CD4-positive, alpha-beta memory T cell (primary cell): ENCODE measurements at regions of chr10 and their contacts with region 1.

Region 1: DNA sequence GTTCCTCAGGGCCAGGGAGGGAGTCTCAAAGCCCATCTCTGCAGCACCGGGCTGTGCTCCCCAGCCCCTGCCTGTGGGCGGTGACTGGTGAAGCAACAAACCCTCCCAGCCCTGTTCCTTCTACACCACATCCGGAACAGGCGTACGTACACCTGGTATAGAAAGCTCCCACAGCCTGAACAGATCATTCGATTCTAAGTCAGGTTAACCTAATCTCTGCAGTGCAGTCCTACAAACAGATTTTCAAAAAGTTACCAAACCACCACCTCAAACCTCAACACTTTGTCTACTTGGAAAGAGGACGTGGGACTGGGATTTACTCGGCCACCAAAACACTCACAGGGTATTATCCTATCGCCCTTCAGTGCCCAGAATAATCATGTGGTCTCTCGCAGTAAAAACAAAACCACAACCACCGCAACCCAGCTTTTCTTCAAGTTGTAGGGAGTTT is 238.4 kb downstream of the DIP2C start:
- DNase-seq: peak; percentile 81 to 86 (median 84)
- H3K4me3 ChIP-seq: peak overlapping the region in 1 of 2 donors; percentile 37
- H3K4me3 Mint-ChIP-seq: peak overlapping the region; percentile 72 to 89 (median 79)
- H3K27ac ChIP-seq: peak overlapping the region; percentile 14
- H3K27ac Mint-ChIP-seq: peak overlapping the region; percentile 88 to 95 (median 90)
- H3K4me1 ChIP-seq: peaks cover 65% of the 10 kb centered on the region
- H3K4me1 Mint-ChIP-seq: peaks cover 33 to 71% (median 56%) of the 10 kb centered on the region in 4 donors
- H3K27me3 ChIP-seq: no peaks in the 10 kb centered on the region
- H3K27me3 Mint-ChIP-seq: no peaks in the 10 kb centered on the region

Region 2: DNA sequence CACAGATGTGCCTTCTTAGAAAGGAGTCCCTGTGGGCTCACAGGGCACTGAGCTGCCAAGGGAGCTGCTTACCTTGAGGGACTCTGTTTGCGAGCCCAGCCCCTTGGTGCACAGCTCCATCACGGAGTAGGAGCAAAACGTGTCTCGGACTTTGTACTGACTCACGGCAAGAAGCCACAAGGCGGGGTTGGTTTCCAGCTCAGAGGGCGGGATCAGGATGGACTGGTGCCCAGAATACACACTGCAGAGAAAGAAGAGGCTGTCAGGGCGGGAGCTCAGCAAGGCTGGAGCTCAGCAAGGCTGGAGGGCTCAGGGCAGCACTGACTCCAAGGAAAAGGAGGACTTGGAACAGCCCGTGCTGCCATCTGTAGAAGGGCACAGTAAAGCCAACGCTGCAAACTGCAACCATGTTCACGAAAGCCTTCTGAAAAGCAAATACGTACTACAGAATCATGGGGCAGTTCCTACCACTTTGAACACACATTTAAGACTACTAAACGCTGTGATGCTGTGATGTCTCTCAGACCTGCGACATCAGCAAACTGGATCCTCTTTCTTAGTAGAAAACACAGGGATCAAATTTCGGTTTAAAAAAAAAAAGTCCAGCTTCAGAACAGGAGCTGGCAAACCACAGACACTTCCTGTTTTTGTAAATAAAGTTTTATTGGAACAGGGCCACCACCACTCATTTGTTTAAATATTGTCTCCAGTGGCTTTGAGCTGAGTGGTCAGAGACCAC is 121.5 kb before region 1 on chr10:
- CTCF ChIA-PET with region 1: no interaction called
- POLR2A ChIA-PET with region 1: interaction called, 4 read pairs
- intact Hi-C with region 1: loop called (anchors 5 kb)
- DNase-seq: peak in 4 of 5 donors; percentile 15 to 51 (median 28)
- H3K4me3 ChIP-seq: peak overlapping the region in 1 of 2 donors; percentile 38
- H3K4me3 Mint-ChIP-seq: peak overlapping the region; percentile 63 to 82 (median 76)
- H3K27ac ChIP-seq: peak overlapping the region; percentile 20
- H3K27ac Mint-ChIP-seq: peak overlapping the region; percentile 26 to 89 (median 81)
- H3K4me1 ChIP-seq: peaks cover 40% of the 10 kb centered on the region
- H3K4me1 Mint-ChIP-seq: peaks cover 23 to 50% (median 42%) of the 10 kb centered on the region in 4 donors
- H3K27me3 ChIP-seq: no peaks in the 10 kb centered on the region
- H3K27me3 Mint-ChIP-seq: no peaks in the 10 kb centered on the region

Region 3: DNA sequence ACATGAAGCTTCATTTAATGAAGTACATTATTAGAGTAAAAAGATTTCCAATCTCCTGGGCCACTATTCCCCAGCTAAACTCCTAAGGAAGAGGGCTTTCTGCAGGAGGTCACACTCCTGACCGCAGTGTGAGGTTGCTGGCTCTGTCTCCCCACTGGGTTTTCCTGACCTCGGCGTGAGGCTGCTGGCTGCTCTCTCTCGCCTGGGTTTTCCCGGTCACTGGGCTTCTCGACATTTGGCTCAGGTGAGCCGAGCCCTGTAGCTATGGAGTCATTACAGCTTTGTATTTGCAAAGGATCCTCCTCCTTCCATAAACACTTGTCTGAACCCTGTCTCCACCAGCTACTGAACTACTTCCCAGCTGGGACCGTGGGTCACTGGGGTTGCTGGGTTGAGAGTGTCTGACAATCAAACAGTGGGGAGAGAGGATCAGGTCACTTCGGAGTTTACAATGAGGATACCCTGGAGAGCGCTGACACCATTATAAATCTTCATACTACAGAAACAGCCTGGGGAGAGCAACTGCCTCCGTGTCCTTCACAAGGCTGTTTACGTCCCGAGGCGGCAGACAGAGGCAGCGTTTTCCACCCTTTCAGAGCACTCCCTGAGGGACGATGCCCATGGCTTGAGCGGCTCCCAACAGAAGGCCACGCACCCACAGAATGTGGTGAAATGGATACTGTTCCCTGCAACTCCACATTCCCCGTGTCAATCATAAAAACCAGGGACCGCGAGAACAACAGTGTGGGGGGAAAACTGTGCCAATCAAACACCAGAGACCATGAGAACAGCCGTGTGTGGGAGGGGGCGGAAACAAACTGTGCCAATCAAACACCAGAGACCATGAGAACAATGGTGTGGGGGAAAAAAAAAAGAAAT is 89.6 kb before region 1 on chr10:
- CTCF ChIA-PET with region 1: no interaction called
- POLR2A ChIA-PET with region 1: no interaction called
- intact Hi-C with region 1: no loop called
- DNase-seq: no peak
- H3K4me3 ChIP-seq: no peak overlapping the region
- H3K4me3 Mint-ChIP-seq: no peak overlapping the region
- H3K27ac ChIP-seq: no peak overlapping the region
- H3K27ac Mint-ChIP-seq: peak overlapping the region in 4 of 7 donors; percentile 24 to 42 (median 30)
- H3K4me1 ChIP-seq: no peaks in the 10 kb centered on the region
- H3K4me1 Mint-ChIP-seq: no peaks in the 10 kb centered on the region
- H3K27me3 ChIP-seq: no peaks in the 10 kb centered on the region
- H3K27me3 Mint-ChIP-seq: no peaks in the 10 kb centered on the region

Region 4: DNA sequence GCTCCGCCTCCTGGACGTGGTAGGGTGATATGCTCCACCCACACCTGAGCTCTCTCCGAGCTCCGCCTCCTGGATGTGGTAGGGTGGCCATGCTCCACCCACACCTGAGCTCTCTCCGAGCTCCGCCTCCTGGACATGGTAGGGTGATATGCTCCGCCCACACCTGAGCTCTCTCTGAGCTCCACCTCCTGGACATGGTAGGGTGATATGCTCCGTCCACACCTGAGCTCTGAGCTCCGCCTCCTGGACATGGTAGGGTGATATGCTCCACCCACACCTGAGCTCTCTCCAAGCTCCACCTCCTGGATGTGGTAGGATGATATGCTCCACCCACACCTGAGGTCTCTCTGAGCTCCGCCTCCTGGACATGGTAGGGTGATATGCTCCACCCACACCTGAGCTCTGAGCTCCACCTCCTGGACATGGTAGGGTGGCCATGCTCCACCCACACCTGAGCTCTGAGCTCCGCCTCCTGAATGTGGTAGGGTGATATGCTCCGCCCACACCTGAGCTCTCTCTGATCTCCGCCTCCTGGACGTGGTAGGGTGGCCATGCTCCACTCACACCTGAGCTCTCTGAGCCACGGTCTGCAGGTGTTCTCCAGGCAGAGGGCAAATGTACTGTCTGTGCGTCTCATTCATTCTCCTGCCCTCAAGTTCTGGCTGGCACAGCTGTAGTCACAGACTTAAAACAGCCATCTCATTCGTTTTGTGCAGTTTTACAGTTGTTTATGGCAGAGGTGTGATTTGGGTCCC is 14.0 kb before region 1 on chr10:
- CTCF ChIA-PET with region 1: interaction called, 3 read pairs
- POLR2A ChIA-PET with region 1: interaction called, 17 read pairs
- intact Hi-C with region 1: loop called (anchors 1 kb)
- DNase-seq: peak in 3 of 5 donors; percentile 31 to 62 (median 45)
- H3K4me3 ChIP-seq: no peak overlapping the region
- H3K4me3 Mint-ChIP-seq: peak overlapping the region; percentile 32 to 80 (median 69)
- H3K27ac ChIP-seq: no peak overlapping the region
- H3K27ac Mint-ChIP-seq: peak overlapping the region; percentile 74 to 96 (median 85)
- H3K4me1 ChIP-seq: peaks cover 60% of the 10 kb centered on the region
- H3K4me1 Mint-ChIP-seq: peaks cover 33 to 66% (median 51%) of the 10 kb centered on the region in 4 donors
- H3K27me3 ChIP-seq: no peaks in the 10 kb centered on the region
- H3K27me3 Mint-ChIP-seq: no peaks in the 10 kb centered on the region

Region 5: DNA sequence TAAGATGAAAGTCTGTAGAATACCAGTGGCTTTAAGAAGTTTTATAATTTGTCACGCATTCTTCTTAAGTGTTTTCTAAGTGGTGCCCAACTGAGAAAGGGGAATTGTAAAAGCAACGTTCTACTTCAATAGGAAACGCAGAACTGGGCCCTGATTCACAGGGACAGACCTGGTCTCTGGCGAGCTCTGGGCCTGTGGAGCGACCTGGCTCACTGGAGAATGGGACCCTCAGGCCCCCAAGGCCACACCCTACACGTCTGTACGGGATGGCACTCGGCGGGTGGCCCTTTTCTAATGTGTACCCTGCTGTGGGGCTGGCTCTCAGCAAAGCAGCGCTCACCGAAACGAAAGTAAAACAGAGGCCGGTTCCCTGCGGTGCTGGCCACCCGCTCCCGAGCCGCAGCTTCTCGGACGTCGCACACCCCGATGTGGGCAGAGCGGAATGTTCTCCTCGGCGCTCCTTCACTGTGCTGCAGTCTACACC is 33.4 kb after region 1 on chr10:
- CTCF ChIA-PET with region 1: no interaction called
- POLR2A ChIA-PET with region 1: interaction called, 10 read pairs
- intact Hi-C with region 1: no loop called
- DNase-seq: peak in 3 of 5 donors; percentile 30 to 41 (median 35)
- H3K4me3 ChIP-seq: peak overlapping the region in 1 of 2 donors; percentile 40
- H3K4me3 Mint-ChIP-seq: peak overlapping the region; percentile 82 to 94 (median 90)
- H3K27ac ChIP-seq: peak overlapping the region; percentile 72
- H3K27ac Mint-ChIP-seq: peak overlapping the region; percentile 92 to 98 (median 94)
- H3K4me1 ChIP-seq: no peaks in the 10 kb centered on the region
- H3K4me1 Mint-ChIP-seq: peaks cover 6 to 30% (median 19%) of the 10 kb centered on the region in 4 donors
- H3K27me3 ChIP-seq: no peaks in the 10 kb centered on the region
- H3K27me3 Mint-ChIP-seq: peaks cover 2% of the 10 kb centered on the region in 2 donors

Region 6: GRCh38 chr10:851901-852300 is 400.9 kb after region 1 on chr10:
- CTCF ChIA-PET with region 1: no interaction called
- POLR2A ChIA-PET with region 1: no interaction called
- intact Hi-C with region 1: no loop called
- DNase-seq: no peak
- H3K4me3 ChIP-seq: no peak overlapping the region
- H3K4me3 Mint-ChIP-seq: peak overlapping the region in 1 of 8 donors; percentile 10
- H3K27ac ChIP-seq: no peak overlapping the region
- H3K27ac Mint-ChIP-seq: peak overlapping the region in 3 of 7 donors; percentile 3 to 82 (median 26)
- H3K4me1 ChIP-seq: peaks cover 4% of the 10 kb centered on the region
- H3K4me1 Mint-ChIP-seq: peaks cover 37 to 65% (median 52%) of the 10 kb centered on the region in 4 donors
- H3K27me3 ChIP-seq: no peaks in the 10 kb centered on the region
- H3K27me3 Mint-ChIP-seq: no peaks in the 10 kb centered on the region